Lower lobe of right lung (tissue), 2 donors: ENCODE measurements at regions of chr4 and their contacts with region 1.

Region 1: GRCh38 chr4:54228056-54228527 is 1.0 kb upstream of the PDGFRA start:
- DNase-seq: peak; percentile 62
- ATAC-seq: peak; percentile 53 to 59
- H3K4me3 ChIP-seq: peak overlapping the region; percentile 59
- H3K27ac ChIP-seq: peak overlapping the region; percentile 62
- H3K4me1 ChIP-seq: peaks cover 67% of the 10 kb centered on the region
- H3K27me3 ChIP-seq: peaks cover 98% of the 10 kb centered on the region
- CTCF ChIP-seq: peak; percentile 60

Region 2: DNA sequence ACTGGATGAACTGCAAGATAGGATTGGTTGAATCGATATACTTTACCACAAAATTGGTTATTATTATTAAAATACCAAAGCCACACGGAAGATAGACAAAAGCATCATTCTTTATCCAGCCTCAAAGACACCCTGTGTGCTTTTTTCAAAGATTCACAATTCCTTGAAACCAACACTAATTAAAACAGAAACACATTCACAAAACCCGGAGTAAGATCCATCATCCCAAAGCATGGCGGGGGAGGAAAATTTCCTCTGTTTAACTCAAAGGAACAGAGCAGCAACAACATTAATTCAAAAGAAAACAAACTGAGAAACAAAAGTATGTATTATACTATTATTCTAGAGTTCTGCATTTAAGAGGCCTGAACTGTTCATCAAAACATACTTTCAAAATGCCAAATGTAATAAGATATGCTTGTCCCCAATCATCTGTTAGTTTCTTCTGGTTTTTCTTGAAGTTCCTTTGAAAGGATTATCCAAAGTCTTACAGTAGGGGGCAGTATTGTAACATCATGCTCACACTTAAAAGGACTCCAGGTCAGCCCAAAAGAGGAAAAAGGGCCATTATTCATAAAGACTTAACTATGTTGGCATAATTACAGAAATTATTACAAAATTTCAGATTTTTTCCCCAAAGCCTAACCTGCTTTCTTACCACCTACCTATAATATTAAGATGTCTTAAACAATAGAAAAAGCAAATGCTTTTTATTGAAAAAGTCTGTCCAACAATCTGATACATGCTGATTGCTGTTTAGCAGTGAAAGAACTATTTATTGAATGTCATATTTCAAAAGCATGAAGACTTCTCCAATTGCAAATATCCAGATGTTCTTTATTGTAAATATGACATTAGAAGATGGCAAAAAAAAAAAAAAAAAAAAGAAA is 1031.0 kb before region 1 on chr4:
- intact Hi-C with region 1: loop called (anchors 10 kb)
- DNase-seq: no peak
- ATAC-seq: peak in 1 of 2 donors; percentile 67
- H3K4me3 ChIP-seq: no peak overlapping the region
- H3K27ac ChIP-seq: no peak overlapping the region
- H3K4me1 ChIP-seq: no peaks in the 10 kb centered on the region
- H3K27me3 ChIP-seq: no peaks in the 10 kb centered on the region
- CTCF ChIP-seq: peak; percentile 74

Region 3: DNA sequence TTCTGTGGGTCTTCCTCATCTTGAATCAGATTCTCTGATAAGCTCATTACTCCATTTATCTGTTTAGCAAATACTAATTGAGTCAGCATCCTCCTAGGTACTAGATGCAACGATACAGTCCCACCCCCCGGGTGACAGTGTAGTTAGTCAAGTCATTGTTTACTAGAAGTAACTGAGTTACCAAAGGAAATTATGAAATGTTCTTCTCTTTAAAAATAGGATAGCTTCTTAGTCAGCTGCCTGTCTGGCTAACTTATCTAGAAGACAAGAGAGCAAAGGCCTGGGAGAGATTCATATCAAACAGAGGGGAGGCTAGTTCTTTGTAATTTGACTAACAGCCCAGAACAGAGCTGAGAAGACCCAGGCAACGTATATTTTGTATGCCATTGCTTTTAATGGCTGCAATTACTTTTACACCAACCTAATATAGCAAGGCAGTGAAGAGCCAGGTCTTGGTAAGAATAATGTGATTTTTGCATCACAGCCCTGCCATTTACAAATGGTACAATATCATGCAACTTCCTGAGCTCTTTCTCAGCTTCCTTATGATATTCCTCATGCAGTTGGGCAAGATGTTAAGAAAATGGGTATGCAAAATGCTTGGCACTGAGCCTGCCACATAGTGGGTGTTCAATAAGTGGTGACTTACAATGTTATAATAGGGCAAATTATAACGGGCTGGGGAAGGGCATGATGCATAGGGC is 313.6 kb before region 1 on chr4:
- intact Hi-C with region 1: loop called (anchors 10 kb)
- DNase-seq: peak; percentile 78
- ATAC-seq: peak; percentile 65 to 79
- H3K4me3 ChIP-seq: no peak overlapping the region
- H3K27ac ChIP-seq: peak overlapping the region; percentile 61
- H3K4me1 ChIP-seq: peaks cover under 1% of the 10 kb centered on the region
- H3K27me3 ChIP-seq: no peaks in the 10 kb centered on the region
- CTCF ChIP-seq: no peak

Region 4: GRCh38 chr4:54571293-54572151 is 343.4 kb after region 1 on chr4:
- intact Hi-C with region 1: no loop called
- DNase-seq: no peak
- ATAC-seq: no peak
- H3K4me3 ChIP-seq: no peak overlapping the region
- H3K27ac ChIP-seq: no peak overlapping the region
- H3K4me1 ChIP-seq: no peaks in the 10 kb centered on the region
- H3K27me3 ChIP-seq: no peaks in the 10 kb centered on the region
- CTCF ChIP-seq: no peak